PC-3 (cell line): ENCODE measurements at regions of chr13 and their contacts with region 1.

Region 1: DNA sequence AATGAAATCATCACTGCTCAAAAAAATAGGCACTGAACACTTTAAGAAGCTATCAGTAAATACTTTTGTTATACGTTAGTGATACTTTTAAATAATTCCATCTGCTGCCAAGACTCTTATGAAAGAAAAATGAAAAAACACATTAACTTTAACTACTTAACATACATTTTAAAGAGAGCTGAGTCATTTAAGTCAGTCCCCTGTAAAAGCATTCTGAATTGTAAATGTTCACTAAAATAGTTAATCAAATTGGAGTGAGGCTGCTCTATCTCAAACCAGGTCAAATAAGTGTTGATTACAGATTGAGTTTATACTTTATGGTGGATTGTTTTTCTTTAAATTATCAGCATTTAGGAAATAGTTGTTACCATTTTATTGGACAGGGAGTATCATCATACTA is 274.2 kb downstream of the MYO16 start:
- DNase-seq: no peak
- ATAC-seq: no peak
- H3K4me3 ChIP-seq: no peak overlapping the region
- H3K27ac ChIP-seq: no peak overlapping the region
- H3K4me1 ChIP-seq: peaks cover 3% of the 10 kb centered on the region; the same call in 1 of the 2 replicates
- H3K27me3 ChIP-seq: no peaks in the 10 kb centered on the region
- CTCF ChIP-seq: no peak

Region 2: GRCh38 chr13:109087916-109088623 is 184.5 kb after region 1 on chr13:
- CTCF ChIA-PET with region 1: no interaction called
- POLR2A ChIA-PET with region 1: no interaction called
- intact Hi-C with region 1: no loop called
- DNase-seq: no peak
- ATAC-seq: no peak
- H3K4me3 ChIP-seq: no peak overlapping the region
- H3K27ac ChIP-seq: no peak overlapping the region
- H3K4me1 ChIP-seq: no peaks in the 10 kb centered on the region
- H3K27me3 ChIP-seq: peaks cover 56% of the 10 kb centered on the region
- CTCF ChIP-seq: no peak

Region 3: GRCh38 chr13:110234532-110234931 is 1330.9 kb after region 1 on chr13:
- CTCF ChIA-PET with region 1: no interaction called
- POLR2A ChIA-PET with region 1: interaction called, 10 read pairs
- intact Hi-C with region 1: no loop called
- DNase-seq: no peak
- ATAC-seq: no peak
- H3K4me3 ChIP-seq: no peak overlapping the region
- H3K27ac ChIP-seq: no peak overlapping the region
- H3K4me1 ChIP-seq: peaks cover 12% of the 10 kb centered on the region
- H3K27me3 ChIP-seq: no peaks in the 10 kb centered on the region
- CTCF ChIP-seq: no peak